ENCODE measurements at regions of chr9 and their contacts with region 1.

Region 1: GRCh38 chr9:86955561-86955960 is 8.3 kb upstream of the GAS1 start:
- DNase-seq: no peak
- ATAC-seq: peak; percentile 62

Region 2: GRCh38 chr9:87020169-87020950 is 64.8 kb after region 1 on chr9:
- intact Hi-C with region 1: loop called (anchors 10 kb)
- DNase-seq: no peak
- ATAC-seq: no peak

Region 3: DNA sequence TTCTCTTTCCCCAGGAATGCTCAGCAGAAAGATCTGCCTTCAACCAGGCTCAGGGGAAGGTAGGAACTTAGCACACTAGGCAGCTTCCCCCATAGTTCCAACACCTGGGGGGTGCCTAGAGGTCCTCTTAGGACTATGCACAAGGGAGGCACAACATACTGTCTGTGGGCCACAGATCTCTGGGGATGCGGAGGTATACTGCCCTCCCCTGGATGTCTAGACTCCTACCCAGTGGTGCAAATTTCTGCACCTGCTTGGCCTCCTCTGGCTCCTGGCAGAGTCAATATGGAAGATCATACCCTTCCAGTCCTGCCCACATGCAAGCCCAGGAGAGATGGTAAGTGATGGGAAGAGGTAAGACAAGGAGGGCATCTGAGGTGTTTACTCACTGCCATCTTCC is 294.6 kb after region 1 on chr9:
- intact Hi-C with region 1: no loop called
- DNase-seq: no peak
- ATAC-seq: no peak

Measured in Right ventricle myocardium superior (tissue), 1 donor.